Naive thymus-derived CD8-positive, alpha-beta T cell (primary cell): ENCODE measurements at regions of chr19 and their contacts with region 1.

Region 1: GRCh38 chr19:49665351-49666119 is at the starts of genes BCL2L12 and IRF3:
- DNase-seq: peak; percentile 99 to 100 (median 99)
- ATAC-seq: peak; percentile 81 to 86
- H3K4me3 Mint-ChIP-seq: peak within 1 kb of the TSS; percentile 96 to 100 (median 99)
- H3K27ac Mint-ChIP-seq: peak within 1 kb of the TSS; percentile 94 to 100 (median 98)
- H3K4me1 Mint-ChIP-seq: peaks cover 23 to 53% (median 42%) of the 10 kb centered on the region in 4 donors
- H3K27me3 Mint-ChIP-seq: no peaks in the 10 kb centered on the region
- polyA plus RNA-seq, gene BCL2L12: 19.3 to 20.6 (median 19.6) TPM
- polyA plus RNA-seq, gene IRF3: 54.6 to 76.1 (median 65.1) TPM

Region 2: DNA sequence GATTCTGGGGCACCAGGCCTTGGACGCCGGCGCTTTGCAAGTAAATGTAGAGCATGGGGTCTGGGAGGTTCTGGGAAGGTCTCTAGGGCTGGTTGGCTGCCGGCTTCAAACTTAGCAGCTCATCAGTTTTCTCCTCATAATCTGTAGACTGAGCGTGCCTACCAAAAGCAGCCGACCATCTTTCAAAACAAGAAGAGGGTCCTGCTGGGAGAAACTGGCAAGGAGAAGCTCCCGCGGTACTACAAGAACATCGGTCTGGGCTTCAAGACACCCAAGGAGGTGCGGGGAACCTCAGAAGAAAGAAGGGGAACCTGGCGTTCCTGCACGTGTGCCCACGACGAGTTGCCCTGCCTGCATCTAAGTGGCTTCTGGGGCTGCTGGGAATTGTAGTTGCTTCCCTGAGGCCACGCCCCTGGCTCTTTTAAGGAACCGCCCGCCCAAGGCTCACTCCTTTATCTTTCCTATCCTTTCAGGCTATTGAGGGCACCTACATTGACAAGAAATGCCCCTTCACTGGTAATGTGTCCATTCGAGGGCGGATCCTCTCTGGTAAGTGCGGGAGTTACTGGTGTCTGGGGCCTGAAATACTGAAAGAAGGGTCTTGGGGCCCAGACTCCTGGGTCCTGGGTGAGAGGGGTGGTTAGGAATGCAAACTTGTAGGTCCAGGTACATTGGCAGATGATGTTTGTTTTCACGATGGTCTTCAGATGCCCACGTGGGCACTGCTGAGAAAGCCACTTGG is 168.3 kb before region 1 on chr19:
- POLR2A ChIA-PET with region 1: interaction called, 24 read pairs
- DNase-seq: peak; percentile 51 to 87 (median 72)
- ATAC-seq: peak; percentile 3 to 5
- H3K4me3 Mint-ChIP-seq: peak overlapping the region; percentile 96 to 100 (median 100)
- H3K27ac Mint-ChIP-seq: peak overlapping the region; percentile 96 to 100 (median 99)
- H3K4me1 Mint-ChIP-seq: peaks cover 18 to 79% (median 66%) of the 10 kb centered on the region in 4 donors
- H3K27me3 Mint-ChIP-seq: peaks cover 0 to 2% (median 0%) of the 10 kb centered on the region in 5 donors

Region 3: DNA sequence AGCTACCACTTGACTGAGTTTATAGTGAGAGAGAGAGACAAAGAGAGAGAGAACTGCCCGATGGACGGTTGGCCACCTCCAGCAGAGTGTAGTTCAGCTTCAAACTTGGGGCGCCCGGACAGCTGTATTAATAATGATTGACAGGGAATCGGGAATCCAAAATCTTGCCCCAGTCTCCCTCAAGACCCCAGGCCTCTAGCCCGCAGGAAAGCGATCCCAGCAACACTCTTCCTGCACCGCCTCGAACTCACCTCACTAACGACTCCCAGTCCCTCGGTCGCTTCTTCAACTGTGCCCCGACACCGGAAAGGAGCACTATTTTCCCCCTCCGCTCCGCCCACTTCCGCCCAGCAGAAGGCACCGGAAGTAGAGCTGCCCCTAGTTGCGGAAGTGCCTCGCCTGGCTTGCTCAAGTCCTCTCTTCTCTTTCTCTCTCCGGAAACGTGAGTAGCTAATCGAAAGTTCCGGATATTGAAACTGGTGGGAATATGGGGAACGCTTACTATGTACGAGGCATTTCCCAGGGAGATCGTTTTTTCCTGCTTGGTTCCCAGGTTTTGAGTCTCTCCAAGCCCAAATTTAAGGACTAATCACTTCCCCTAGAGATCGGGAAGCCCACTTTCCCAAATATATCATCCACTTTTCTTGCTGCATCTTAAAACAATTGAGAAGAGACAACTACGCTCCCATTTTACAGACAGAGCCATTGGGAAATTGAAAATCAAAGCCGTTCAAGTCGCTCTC is 85.1 kb before region 1 on chr19 and contains the start of gene NOSIP:
- POLR2A ChIA-PET with region 1: interaction called, 15 read pairs
- DNase-seq: peak; percentile 88 to 98 (median 96)
- ATAC-seq: peak; percentile 98 to 99
- H3K4me3 Mint-ChIP-seq: peak within 1 kb of the TSS; percentile 90 to 98 (median 94)
- H3K27ac Mint-ChIP-seq: peak within 1 kb of the TSS; percentile 89 to 97 (median 93)
- H3K4me1 Mint-ChIP-seq: peaks cover 14 to 44% (median 36%) of the 10 kb centered on the region in 4 donors
- H3K27me3 Mint-ChIP-seq: no peaks in the 10 kb centered on the region
- polyA plus RNA-seq, gene NOSIP: 662 to 854 (median 844) TPM

Region 4: DNA sequence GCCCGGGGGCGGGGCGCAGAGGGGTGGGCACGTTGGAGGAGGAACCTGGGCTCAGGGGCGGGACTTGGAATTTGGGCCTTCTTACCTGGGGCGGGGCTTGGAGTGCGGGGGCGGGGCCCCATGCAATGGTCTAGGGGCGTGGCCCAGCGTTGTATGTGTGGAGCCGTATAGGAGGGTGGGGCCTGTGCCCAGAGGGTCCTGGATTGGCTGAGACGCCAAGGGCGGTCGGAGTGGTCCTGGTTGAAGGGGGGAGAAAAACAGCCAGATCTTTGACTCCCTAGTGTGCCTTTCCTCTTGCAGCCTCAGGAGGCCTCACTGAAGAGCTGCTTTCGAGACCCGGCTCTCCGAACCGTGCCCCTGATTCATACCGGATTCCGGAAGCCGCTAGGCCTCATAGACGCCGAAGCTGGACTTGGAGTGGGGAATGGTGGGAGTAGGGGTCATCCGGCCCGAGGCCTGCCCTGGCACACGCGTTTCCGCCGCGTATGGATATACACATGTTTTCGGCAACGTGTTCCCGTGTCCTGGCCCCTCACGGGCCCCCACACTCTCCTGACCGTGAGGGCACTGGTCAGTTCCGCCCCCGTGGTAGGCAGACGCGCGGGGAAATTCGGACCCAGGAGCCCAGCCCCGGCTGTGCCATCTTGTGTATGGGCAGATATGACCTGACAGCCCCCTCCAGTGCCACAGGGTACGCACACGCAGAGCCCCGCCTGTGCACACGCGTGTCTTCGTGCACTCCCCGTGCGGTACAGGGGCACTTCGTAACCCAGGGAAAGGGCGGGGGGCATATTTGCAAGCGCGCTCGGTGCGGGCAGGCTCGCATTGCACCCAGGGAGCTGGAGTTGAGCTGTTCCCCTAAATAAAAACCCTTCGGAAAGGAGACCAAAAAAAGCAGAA is 75.2 kb before region 1 on chr19:
- POLR2A ChIA-PET with region 1: interaction called, 68 read pairs
- DNase-seq: peak; percentile 89 to 99 (median 98)
- ATAC-seq: peak; percentile 78 to 82
- H3K4me3 Mint-ChIP-seq: peak overlapping the region; percentile 86 to 97 (median 92)
- H3K27ac Mint-ChIP-seq: peak overlapping the region; percentile 34 to 97 (median 92)
- H3K4me1 Mint-ChIP-seq: peaks cover 22 to 46% (median 34%) of the 10 kb centered on the region in 4 donors
- H3K27me3 Mint-ChIP-seq: no peaks in the 10 kb centered on the region

Region 5: GRCh38 chr19:49640113-49640898 is 25.2 kb before region 1 on chr19 and contains the start of gene RRAS:
- POLR2A ChIA-PET with region 1: interaction called, 98 read pairs
- DNase-seq: peak; percentile 94 to 100 (median 99)
- ATAC-seq: peak; percentile 67 to 73
- H3K4me3 Mint-ChIP-seq: peak within 1 kb of the TSS; percentile 87 to 98 (median 94)
- H3K27ac Mint-ChIP-seq: peak within 1 kb of the TSS; percentile 94 to 99 (median 97)
- H3K4me1 Mint-ChIP-seq: peaks cover 45 to 68% (median 58%) of the 10 kb centered on the region in 4 donors
- H3K27me3 Mint-ChIP-seq: no peaks in the 10 kb centered on the region
- polyA plus RNA-seq, gene RRAS: 21.8 to 30.2 (median 28.4) TPM

Region 6: GRCh38 chr19:49786376-49786820 is 120.9 kb after region 1 on chr19:
- POLR2A ChIA-PET with region 1: no interaction called
- DNase-seq: no peak
- ATAC-seq: no peak
- H3K4me3 Mint-ChIP-seq: no peak overlapping the region
- H3K27ac Mint-ChIP-seq: peak overlapping the region in 2 of 10 donors; percentile 61 to 73
- H3K4me1 Mint-ChIP-seq: peaks cover 0 to 18% (median 8%) of the 10 kb centered on the region in 4 donors
- H3K27me3 Mint-ChIP-seq: no peaks in the 10 kb centered on the region